Sigmoid colon (tissue), 7 donors: ENCODE measurements at regions of chr10 and their contacts with region 1.

Region 1: DNA sequence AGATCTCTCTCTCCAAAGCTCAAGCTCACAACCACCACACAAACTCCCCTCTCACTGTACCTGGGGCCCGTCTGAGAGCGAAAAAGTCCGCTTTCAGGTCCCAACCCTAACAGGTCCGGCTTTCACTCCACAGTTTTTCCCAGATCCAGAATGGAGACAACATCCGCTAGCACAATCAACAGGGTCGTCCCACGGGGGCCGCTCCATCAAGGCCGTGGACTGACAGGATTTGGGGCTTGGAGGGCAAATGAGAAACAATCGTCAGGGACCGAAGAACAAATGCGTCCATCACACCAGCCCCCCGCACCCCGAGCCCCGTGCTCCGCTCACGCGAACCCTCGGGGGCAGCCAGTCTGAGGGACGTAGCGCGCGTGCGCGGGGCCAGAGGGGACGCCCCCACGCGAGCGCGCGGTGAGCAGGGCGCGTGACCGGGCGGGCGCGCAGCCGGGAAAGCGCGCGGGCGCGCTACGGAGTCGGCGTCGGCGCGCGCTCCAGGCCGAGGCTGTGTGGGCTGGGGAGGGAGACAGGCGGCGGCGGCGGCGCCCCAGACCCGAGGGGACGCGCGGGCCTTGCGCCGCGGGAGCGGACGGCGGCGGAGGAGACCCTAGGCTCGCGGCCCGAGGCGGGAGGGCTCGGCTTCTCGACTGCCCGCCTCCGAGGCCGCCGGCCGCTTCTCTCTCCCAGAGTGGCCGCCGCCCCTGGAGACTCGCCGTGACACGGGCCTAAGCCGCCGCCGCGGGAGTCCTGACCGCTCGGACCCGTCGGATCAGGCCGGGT is at the start of gene SLK:
- DNase-seq: peak; percentile 89
- H3K4me3 ChIP-seq: peak within 1 kb of the TSS; percentile 86 to 98 (median 94)
- H3K27ac ChIP-seq: peak within 1 kb of the TSS; percentile 97 to 99 (median 98)
- H3K4me1 ChIP-seq: peaks cover 0 to 35% (median 25%) of the 10 kb centered on the region in 4 donors
- H3K27me3 ChIP-seq: no peaks in the 10 kb centered on the region
- CTCF ChIP-seq: no peak
- EP300 ChIP-seq: no peak
- POLR2A ChIP-seq: peak in 1 of 2 donors; percentile 22
- total RNA-seq, gene SLK: 72.1 to 96.1 (median 76.5) TPM

Region 2: GRCh38 chr10:103327906-103328305 is 639.0 kb before region 1 on chr10:
- intact Hi-C with region 1: no loop called
- DNase-seq: no peak
- H3K4me3 ChIP-seq: no peak overlapping the region
- H3K27ac ChIP-seq: no peak overlapping the region
- H3K4me1 ChIP-seq: no peaks in the 10 kb centered on the region
- H3K27me3 ChIP-seq: no peaks in the 10 kb centered on the region
- CTCF ChIP-seq: no peak
- EP300 ChIP-seq: no peak
- POLR2A ChIP-seq: no peak

Region 3: GRCh38 chr10:103918053-103918846 is 48.6 kb before region 1 on chr10 and contains the start of gene STN1:
- intact Hi-C with region 1: loop called (anchors 1 kb)
- DNase-seq: peak; percentile 99
- H3K4me3 ChIP-seq: peak within 1 kb of the TSS; percentile 46 to 78 (median 70)
- H3K27ac ChIP-seq: peak within 1 kb of the TSS; percentile 91 to 97 (median 94)
- H3K4me1 ChIP-seq: peaks cover 0 to 31% (median 27%) of the 10 kb centered on the region in 4 donors
- H3K27me3 ChIP-seq: no peaks in the 10 kb centered on the region
- CTCF ChIP-seq: peak in 1 of 4 experiments; percentile 14
- EP300 ChIP-seq: peak in 1 of 4 donors; percentile 43
- POLR2A ChIP-seq: peak; percentile 90 to 96
- total RNA-seq, gene STN1: 16.0 to 22.5 (median 21.1) TPM

Region 4: DNA sequence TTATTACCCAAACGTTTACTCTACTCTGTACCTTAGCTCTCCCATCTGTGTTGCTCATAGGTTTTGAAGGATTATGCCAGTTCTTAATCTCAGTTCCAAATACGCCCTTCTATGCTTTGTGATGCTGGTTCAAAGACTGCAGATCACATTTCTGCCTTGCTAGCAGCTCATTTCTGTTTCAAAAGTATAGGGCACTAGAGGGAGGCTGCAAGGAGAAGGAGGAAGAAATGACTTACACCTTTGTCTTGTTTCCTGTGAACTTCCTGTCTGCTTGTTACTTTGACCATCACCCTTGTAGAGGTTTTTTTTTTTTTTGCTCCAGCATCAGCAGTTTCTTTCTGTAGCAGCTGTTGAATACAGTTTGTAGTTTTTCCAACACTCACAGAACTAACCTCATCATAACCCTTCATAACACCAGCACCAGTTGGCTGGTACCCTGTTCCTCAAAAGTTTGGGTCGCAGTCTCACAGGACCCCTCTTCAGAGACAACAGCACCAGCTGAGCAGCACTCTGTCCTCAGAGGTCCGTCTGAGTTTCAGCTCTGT is 16.6 kb after region 1 on chr10:
- intact Hi-C with region 1: loop called (anchors 2 kb)
- DNase-seq: no peak
- H3K4me3 ChIP-seq: no peak overlapping the region
- H3K27ac ChIP-seq: no peak overlapping the region
- H3K4me1 ChIP-seq: peaks cover 0 to 75% (median 29%) of the 10 kb centered on the region in 4 donors
- H3K27me3 ChIP-seq: no peaks in the 10 kb centered on the region
- CTCF ChIP-seq: no peak
- EP300 ChIP-seq: no peak
- POLR2A ChIP-seq: no peak